Breast epithelium (tissue), 4 donors: ENCODE measurements at regions of chr17 and their contacts with region 1.

Region 1: GRCh38 chr17:7435221-7435675 is at the start of gene TMEM102:
- DNase-seq: peak; percentile 97 to 98
- H3K4me3 ChIP-seq: peak within 1 kb of the TSS; percentile 46 to 81 (median 62)
- H3K27ac ChIP-seq: peak within 1 kb of the TSS; percentile 91 to 93
- H3K4me1 ChIP-seq: peaks cover 8 to 15% of the 10 kb centered on the region in 2 donors
- H3K27me3 ChIP-seq: no peaks in the 10 kb centered on the region
- CTCF ChIP-seq: no peak
- POLR2A ChIP-seq: no peak
- total RNA-seq, gene TMEM102: 3.5 to 18.1 (median 9.5) TPM

Region 2: DNA sequence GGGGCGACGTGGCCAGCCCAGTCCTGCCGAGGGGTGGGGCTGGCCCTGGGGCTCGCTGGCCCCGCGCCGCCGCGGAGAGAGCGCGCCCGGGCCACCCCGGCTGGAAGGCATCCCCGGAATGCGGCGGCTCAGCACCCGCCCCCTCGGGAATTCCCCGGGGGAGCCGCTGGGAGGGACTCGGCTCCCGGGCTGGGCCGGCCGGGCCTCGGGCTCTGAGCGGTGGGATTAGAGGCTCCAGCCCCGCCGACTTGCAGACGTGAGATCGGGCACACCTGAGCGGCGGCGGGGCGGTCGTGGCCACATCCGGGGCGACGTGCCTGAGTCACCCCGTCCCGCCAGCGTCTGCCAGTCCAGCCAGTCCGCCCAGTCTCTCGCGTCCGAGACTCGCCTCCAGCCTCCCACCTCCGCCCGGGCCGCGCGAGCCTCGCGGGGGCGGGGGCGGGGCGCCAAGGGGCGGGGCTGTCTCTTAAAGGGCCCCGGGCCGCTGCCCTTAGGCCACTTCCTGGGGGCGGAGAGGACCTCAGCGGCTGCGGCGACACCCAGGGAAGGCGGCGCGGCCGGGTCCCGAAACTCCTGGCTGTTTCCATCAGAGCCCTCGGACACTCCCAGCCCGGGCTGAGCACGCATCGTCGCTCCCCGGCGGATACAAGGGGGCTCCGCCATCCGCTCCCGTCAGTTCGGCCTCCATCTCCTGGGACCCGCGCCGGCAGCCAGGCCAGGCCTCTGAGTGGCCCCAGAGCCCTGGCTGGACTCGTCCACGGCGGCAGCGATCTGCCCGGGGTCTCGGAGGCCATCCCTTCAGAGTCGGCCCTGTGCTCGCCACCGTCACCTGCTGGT is 83.4 kb before region 1 on chr17 and contains the start of gene KCTD11:
- intact Hi-C with region 1: loop called (anchors 10 kb)
- DNase-seq: peak; percentile 87 to 93
- H3K4me3 ChIP-seq: peak within 1 kb of the TSS; percentile 70 to 79 (median 72)
- H3K27ac ChIP-seq: peak within 1 kb of the TSS; percentile 98 to 99
- H3K4me1 ChIP-seq: peaks cover 0 to 12% of the 10 kb centered on the region in 2 donors
- H3K27me3 ChIP-seq: no peaks in the 10 kb centered on the region
- CTCF ChIP-seq: peak in 2 of 3 donors; percentile 65 to 78
- POLR2A ChIP-seq: no peak
- total RNA-seq, gene KCTD11: 9.1 to 11.5 (median 11.0) TPM

Region 3: DNA sequence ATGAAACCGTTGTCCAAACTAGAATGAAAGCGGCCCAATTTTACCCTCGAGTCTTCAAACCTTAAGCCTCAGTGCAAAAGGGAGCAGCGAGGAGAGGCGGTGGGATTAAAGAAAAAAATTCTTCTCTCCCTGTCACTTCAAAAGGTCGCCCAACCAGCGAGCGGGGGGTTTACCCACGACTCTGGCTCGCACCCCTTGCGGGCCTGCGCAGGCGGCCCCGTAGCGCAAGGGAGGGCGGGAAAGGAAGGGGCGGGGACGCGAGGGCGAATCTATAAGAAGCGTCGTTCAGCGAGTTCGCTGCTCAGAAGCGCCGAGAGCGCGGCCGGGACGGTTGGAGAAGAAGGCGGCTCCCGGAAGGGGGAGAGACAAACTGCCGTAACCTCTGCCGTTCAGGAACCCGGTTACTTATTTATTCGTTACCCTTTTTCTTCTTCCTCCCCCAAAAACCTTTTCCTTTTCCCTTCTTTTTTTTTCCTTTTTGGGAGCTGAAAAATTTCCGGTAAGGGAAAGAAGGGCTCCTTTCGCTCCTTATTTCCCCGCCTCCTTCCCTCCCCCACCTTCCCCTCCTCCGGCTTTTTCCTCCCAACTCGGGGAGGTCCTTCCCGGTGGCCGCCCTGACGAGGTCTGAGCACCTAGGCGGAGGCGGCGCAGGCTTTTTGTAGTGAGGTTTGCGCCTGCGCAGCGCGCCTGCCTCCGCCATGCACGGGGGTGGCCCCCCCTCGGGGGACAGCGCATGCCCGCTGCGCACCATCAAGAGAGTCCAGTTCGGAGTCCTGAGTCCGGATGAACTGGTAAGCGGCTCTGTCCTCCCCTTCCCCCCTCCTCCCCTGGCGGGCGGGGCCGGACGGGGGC is 49.0 kb after region 1 on chr17 and contains the start of gene POLR2A:
- intact Hi-C with region 1: loop called (anchors 10 kb)
- DNase-seq: peak; percentile 98 to 99
- H3K4me3 ChIP-seq: peak within 1 kb of the TSS; percentile 46 to 76 (median 68)
- H3K27ac ChIP-seq: peak within 1 kb of the TSS; percentile 99
- H3K4me1 ChIP-seq: peaks cover 12 to 23% of the 10 kb centered on the region in 2 donors
- H3K27me3 ChIP-seq: no peaks in the 10 kb centered on the region
- CTCF ChIP-seq: peak in 1 of 3 donors; percentile 45
- POLR2A ChIP-seq: peak; percentile 100
- total RNA-seq, gene POLR2A: 64.2 to 174 (median 88.7) TPM